Heart left ventricle (tissue), 16 donors: ENCODE measurements at regions of chr14 and their contacts with region 1.

Region 1: GRCh38 chr14:38880643-38881524 is 222.2 kb downstream of the SEC23A start:
- DNase-seq: no peak
- ATAC-seq: no peak
- H3K4me3 ChIP-seq: no peak overlapping the region
- H3K27ac ChIP-seq: peak overlapping the region in 3 of 12 donors; percentile 24 to 47 (median 35)
- H3K4me1 ChIP-seq: peaks cover 0 to 23% (median 11%) of the 10 kb centered on the region in 12 donors
- H3K27me3 ChIP-seq: no peaks in the 10 kb centered on the region
- CTCF ChIP-seq: no peak
- POLR2A ChIP-seq: no peak

Region 2: GRCh38 chr14:38989922-38990546 is 109.2 kb after region 1 on chr14:
- intact Hi-C with region 1: loop called in 2 of 10 experiments (anchors 5 to 10 kb)
- DNase-seq: no peak
- ATAC-seq: peak in 2 of 4 donors; percentile 29 to 56
- H3K4me3 ChIP-seq: peak overlapping the region in 2 of 12 donors; percentile 6 to 32
- H3K27ac ChIP-seq: peak overlapping the region in 8 of 12 donors; percentile 35 to 70 (median 60)
- H3K4me1 ChIP-seq: peaks cover 0 to 41% (median 6%) of the 10 kb centered on the region in 12 donors
- H3K27me3 ChIP-seq: no peaks in the 10 kb centered on the region
- CTCF ChIP-seq: no peak
- POLR2A ChIP-seq: no peak

Region 3: GRCh38 chr14:38999949-39000348 is 119.1 kb after region 1 on chr14:
- intact Hi-C with region 1: loop called in 3 of 10 experiments (anchors 5 to 10 kb)
- DNase-seq: no peak
- ATAC-seq: no peak
- H3K4me3 ChIP-seq: no peak overlapping the region
- H3K27ac ChIP-seq: no peak overlapping the region
- H3K4me1 ChIP-seq: peaks cover 0 to 17% (median 8%) of the 10 kb centered on the region in 12 donors
- H3K27me3 ChIP-seq: no peaks in the 10 kb centered on the region
- CTCF ChIP-seq: no peak
- POLR2A ChIP-seq: no peak